ENCODE measurements at regions of chr6 and their contacts with region 1.

Region 1: DNA sequence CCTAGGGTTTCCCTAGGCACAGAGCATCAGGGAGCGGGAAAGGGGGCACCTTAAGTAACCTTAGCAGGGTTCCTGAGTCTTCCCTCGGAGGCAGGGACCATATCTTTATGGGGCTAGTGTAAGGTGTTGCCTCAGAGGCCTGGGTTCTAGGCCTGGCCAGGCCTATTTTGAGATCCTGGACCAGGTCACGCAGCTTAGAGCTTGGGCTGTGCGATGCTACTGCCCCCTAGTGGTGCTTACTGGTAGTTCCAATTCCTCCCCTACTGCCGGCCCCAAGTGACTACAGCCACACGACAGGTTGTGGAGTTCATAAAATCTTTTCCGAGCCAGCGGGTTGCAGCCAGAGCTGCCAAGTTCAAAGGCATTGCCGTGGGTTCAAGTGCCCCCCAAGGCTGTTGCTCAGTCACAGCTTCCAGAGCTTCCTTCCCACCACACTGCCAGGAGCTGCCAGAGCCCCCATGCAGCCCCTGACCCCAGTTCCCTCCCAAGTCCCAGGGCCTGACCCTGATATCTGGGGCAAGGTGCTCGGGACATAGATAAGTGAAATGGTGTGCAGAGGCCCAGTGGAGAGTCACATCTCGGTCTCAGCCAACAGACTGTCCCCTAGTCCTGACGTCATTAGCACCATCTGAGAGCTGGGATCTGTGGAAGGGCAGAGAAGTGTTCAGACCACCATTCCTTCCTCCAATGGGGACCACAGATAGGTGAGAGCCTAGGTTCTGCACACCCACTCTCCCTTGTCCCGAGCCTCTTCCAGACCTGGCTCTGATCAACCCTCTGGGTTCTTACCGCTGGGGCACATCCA is 3.3 kb downstream of the LRRC73 start:
- DNase-seq: no peak
- H3K4me3 ChIP-seq: no peak overlapping the region
- H3K27ac ChIP-seq: no peak overlapping the region
- H3K4me1 ChIP-seq: peaks cover 24% of the 10 kb centered on the region
- H3K27me3 ChIP-seq: no peaks in the 10 kb centered on the region
- CTCF ChIP-seq: peak; percentile 69 to 89 (median 88)
- POLR2A ChIP-seq: no peak

Region 2: GRCh38 chr6:43369174-43370022 is 137.5 kb before region 1 on chr6 and contains the start of gene ZNF318:
- intact Hi-C with region 1: loop called (anchors 10 kb)
- DNase-seq: peak in 1 of 2 donors; percentile 94
- H3K4me3 ChIP-seq: peak within 1 kb of the TSS; percentile 65 to 95
- H3K27ac ChIP-seq: peak within 1 kb of the TSS; percentile 86
- H3K4me1 ChIP-seq: peaks cover 34% of the 10 kb centered on the region
- H3K27me3 ChIP-seq: no peaks in the 10 kb centered on the region
- CTCF ChIP-seq: no peak
- POLR2A ChIP-seq: peak; percentile 12 to 18
- total RNA-seq, gene ZNF318: 17.2 TPM

Region 3: DNA sequence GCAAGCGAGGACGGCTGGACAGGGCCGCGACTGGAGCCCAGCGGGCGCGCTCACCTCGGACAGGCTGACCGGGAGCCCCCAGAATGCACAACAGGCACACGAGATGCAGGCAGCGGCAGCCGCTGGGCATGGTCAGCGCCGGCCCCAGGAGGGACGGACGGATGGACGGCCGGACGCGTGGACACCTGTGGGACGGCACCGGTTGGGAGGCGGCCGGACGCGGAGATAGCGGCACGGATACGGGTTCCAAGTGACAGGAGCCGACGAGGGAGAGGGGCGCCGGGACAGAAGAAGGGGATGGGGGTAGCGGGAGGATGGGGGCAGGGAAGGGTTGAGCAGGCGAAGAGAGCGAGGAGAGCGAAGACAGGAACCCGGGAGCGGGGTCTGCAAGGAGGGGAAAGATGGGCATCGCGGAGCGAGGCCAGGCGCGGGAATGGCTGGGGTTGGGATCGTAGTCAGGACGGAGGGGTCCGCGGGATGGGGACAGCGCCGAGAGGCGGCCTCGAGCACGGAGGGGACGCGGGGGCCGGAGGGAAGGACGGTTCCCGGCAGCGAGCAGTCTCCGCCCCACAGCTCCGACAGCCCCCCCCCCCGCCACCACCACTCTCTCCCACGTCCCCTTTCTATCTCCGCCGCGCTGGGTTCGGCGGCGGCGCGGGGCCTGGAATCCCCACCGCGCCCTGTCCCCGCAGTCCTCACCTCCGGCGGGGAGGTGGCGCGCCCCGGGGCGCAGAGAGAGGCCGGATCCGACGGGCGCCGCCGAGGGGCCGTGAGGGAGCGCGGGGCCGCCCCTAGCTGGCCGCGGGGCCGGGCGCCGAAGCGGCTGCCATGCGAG is 52.0 kb before region 1 on chr6:
- intact Hi-C with region 1: loop called (anchors 5 kb)
- DNase-seq: no peak
- H3K4me3 ChIP-seq: peak overlapping the region; percentile 52 to 55
- H3K27ac ChIP-seq: peak overlapping the region; percentile 49
- H3K4me1 ChIP-seq: peaks cover 18% of the 10 kb centered on the region
- H3K27me3 ChIP-seq: no peaks in the 10 kb centered on the region
- CTCF ChIP-seq: peak in 1 of 3 experiments; percentile 82
- POLR2A ChIP-seq: no peak

Region 4: GRCh38 chr6:43496370-43497128 is 10.3 kb before region 1 on chr6:
- intact Hi-C with region 1: no loop called
- DNase-seq: no peak
- H3K4me3 ChIP-seq: no peak overlapping the region
- H3K27ac ChIP-seq: peak overlapping the region; percentile 21
- H3K4me1 ChIP-seq: peaks cover 49% of the 10 kb centered on the region
- H3K27me3 ChIP-seq: no peaks in the 10 kb centered on the region
- CTCF ChIP-seq: peak in 1 of 3 experiments; percentile 36
- POLR2A ChIP-seq: no peak

Region 5: GRCh38 chr6:43593938-43594337 is 87.1 kb after region 1 on chr6:
- intact Hi-C with region 1: no loop called
- DNase-seq: no peak
- H3K4me3 ChIP-seq: no peak overlapping the region
- H3K27ac ChIP-seq: no peak overlapping the region
- H3K4me1 ChIP-seq: no peaks in the 10 kb centered on the region
- H3K27me3 ChIP-seq: no peaks in the 10 kb centered on the region
- CTCF ChIP-seq: no peak
- POLR2A ChIP-seq: no peak

Region 6: GRCh38 chr6:43779852-43780236 is 273.0 kb after region 1 on chr6:
- intact Hi-C with region 1: no loop called
- DNase-seq: no peak
- H3K4me3 ChIP-seq: no peak overlapping the region
- H3K27ac ChIP-seq: peak overlapping the region; percentile 27
- H3K4me1 ChIP-seq: peaks cover 27% of the 10 kb centered on the region
- H3K27me3 ChIP-seq: no peaks in the 10 kb centered on the region
- CTCF ChIP-seq: no peak
- POLR2A ChIP-seq: no peak

Measured in vagina (tissue), 2 donors.